ENCODE measurements at regions of chr10 and their contacts with region 1.

Region 1: DNA sequence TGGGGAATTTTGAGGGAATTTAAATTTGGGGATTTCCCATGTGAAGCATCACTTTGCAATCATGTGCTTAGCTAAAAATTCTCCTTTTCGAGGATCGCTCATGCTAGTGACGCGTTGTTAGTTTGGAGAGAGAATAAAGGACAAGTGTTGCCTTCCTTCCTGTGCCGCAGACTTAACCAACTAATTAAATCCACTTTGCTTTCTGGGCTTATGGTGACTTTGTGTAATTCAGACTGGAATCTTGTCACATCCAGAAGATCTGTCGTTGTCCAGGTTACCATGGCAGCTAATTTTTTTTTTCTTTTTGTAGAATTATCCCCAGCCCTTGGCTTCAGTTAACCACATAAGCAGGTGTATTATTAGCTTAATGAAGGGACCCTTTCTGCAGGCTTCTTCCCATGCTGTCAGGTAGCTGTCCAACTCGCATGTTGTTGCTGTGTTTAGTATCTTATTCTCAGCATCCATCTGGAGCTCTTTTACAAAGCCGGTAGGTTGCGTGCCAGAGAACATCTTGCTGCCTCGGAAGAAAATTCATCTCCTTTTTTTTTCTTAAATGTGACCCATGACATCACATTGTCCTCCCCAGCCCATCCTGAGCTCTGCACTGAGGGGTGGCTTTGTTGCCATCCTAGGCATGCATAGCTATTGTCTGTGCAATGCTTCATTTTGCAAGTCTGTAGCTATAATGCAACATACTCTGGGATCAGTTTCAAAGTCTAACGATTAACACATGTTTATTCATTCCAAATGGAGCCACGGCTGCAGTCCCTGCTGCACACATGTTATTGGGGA is 47.2 kb upstream of the NRP1 start:
- DNase-seq: no peak
- H3K4me3 ChIP-seq: no peak overlapping the region
- H3K27ac ChIP-seq: no peak overlapping the region
- H3K4me1 ChIP-seq: peaks cover 0 to 3% of the 10 kb centered on the region in 2 donors
- H3K27me3 ChIP-seq: no peaks in the 10 kb centered on the region
- CTCF ChIP-seq: no peak

Region 2: DNA sequence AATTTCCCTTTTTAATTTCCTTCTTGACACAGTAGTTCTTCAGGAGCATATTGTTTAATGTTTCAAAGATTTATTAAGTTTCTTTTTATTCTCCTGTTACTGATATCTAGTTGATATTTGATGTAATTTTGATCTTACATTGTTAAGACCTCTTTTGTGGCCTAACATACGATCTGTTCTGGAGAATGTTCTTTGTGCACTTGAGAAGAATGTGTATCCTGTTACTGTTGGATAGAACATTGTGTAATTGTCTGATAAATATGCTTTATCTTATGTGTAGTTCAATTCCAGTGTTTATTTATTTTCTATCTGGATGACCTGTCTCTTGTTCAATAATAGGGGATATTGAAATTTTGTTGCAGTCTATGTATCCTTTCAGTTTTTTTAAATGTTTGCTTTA is 530.3 kb before region 1 on chr10:
- intact Hi-C with region 1: no loop called
- DNase-seq: no peak
- H3K4me3 ChIP-seq: no peak overlapping the region
- H3K27ac ChIP-seq: no peak overlapping the region
- H3K4me1 ChIP-seq: no peaks in the 10 kb centered on the region
- H3K27me3 ChIP-seq: no peaks in the 10 kb centered on the region
- CTCF ChIP-seq: no peak

Region 3: GRCh38 chr10:33542752-33543505 is 161.3 kb after region 1 on chr10:
- intact Hi-C with region 1: loop called (anchors 10 kb)
- DNase-seq: no peak
- H3K4me3 ChIP-seq: no peak overlapping the region
- H3K27ac ChIP-seq: no peak overlapping the region
- H3K4me1 ChIP-seq: no peaks in the 10 kb centered on the region
- H3K27me3 ChIP-seq: no peaks in the 10 kb centered on the region
- CTCF ChIP-seq: no peak